ENCODE measurements at regions of chr6 and their contacts with region 1.

Region 1: DNA sequence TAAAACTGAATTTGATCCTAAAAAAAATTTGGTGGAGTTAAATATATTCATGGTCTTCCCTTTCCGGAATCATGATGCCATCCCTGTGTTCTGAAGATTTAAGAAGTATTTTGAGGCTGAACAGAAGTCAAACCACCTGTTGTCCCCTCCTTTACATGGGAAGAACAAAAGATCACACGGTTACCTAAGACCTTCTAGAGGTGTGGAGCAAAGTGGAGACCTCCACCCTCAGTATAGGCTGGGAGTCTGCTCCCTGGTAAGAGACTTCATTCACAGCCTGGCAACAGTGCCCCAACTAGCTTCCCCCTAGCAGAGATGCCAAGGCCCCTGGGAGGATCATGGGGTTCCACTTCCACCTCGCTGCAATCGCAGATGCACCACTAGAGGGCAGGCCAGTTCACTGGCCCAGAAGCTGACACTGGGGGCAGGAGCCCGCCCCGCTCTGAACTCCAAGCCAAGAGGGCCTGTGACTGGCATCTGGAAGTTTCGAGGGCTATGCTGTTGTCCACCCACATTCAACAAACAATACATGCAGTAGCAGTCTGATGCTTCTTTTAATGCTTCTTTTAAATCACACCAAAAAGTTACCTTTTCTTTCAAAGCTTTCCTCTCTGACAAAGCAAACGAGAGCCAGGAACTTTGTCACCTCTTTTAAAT is 19.5 kb upstream of the UBE2J1 start:
- DNase-seq: peak; percentile 89
- ATAC-seq: peak; percentile 82
- H3K4me3 Mint-ChIP-seq: no peak overlapping the region
- H3K27ac Mint-ChIP-seq: peak overlapping the region; percentile 78
- H3K4me1 Mint-ChIP-seq: peaks cover 43% of the 10 kb centered on the region
- H3K27me3 Mint-ChIP-seq: peaks cover 17% of the 10 kb centered on the region

Region 2: GRCh38 chr6:88843040-88843439 is 528.9 kb before region 1 on chr6:
- CTCF ChIA-PET with region 1: no interaction called
- DNase-seq: no peak
- ATAC-seq: no peak
- H3K4me3 Mint-ChIP-seq: no peak overlapping the region
- H3K27ac Mint-ChIP-seq: no peak overlapping the region
- H3K4me1 Mint-ChIP-seq: no peaks in the 10 kb centered on the region
- H3K27me3 Mint-ChIP-seq: no peaks in the 10 kb centered on the region

Region 3: DNA sequence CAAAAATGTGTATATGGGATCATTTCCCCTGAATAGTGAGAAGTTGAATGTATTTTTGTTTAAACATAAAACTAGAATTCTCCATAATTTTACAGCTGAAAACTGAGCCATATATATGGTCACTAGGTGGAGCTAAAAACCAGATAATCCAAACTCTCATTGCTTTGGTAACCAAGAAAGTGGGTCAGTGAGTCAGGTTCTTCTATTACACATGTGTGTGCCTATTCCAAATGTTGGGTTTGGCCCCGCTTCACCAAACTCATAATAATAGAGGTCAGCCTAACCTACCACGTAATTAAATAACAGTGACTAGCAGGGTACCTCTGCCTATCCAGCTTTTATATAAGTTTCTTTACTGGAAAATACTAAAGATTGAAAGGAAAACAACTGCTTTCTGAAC is 389.3 kb before region 1 on chr6:
- CTCF ChIA-PET with region 1: interaction called, 11 read pairs
- DNase-seq: no peak
- ATAC-seq: peak; percentile 80
- H3K4me3 Mint-ChIP-seq: no peak overlapping the region
- H3K27ac Mint-ChIP-seq: no peak overlapping the region
- H3K4me1 Mint-ChIP-seq: no peaks in the 10 kb centered on the region
- H3K27me3 Mint-ChIP-seq: peaks cover 3% of the 10 kb centered on the region

Region 4: GRCh38 chr6:89360415-89360999 is 11.5 kb before region 1 on chr6:
- CTCF ChIA-PET with region 1: interaction called, 119 read pairs
- DNase-seq: no peak
- ATAC-seq: peak; percentile 84
- H3K4me3 Mint-ChIP-seq: peak overlapping the region; percentile 11
- H3K27ac Mint-ChIP-seq: peak overlapping the region; percentile 72
- H3K4me1 Mint-ChIP-seq: peaks cover 60% of the 10 kb centered on the region
- H3K27me3 Mint-ChIP-seq: no peaks in the 10 kb centered on the region

Region 5: GRCh38 chr6:89412071-89413005 is 40.4 kb after region 1 on chr6 and contains the start of gene RRAGD:
- CTCF ChIA-PET with region 1: interaction called, 28 read pairs
- DNase-seq: peak; percentile 70
- ATAC-seq: peak; percentile 88
- H3K4me3 Mint-ChIP-seq: peak within 1 kb of the TSS; percentile 83
- H3K27ac Mint-ChIP-seq: peak within 1 kb of the TSS; percentile 67
- H3K4me1 Mint-ChIP-seq: peaks cover 20% of the 10 kb centered on the region
- H3K27me3 Mint-ChIP-seq: peaks cover 61% of the 10 kb centered on the region
- total RNA-seq, gene RRAGD: 1.3 to 5.7 TPM

Region 6: GRCh38 chr6:89610149-89610642 is 238.2 kb after region 1 on chr6:
- CTCF ChIA-PET with region 1: interaction called, 17 read pairs
- DNase-seq: peak; percentile 83
- ATAC-seq: peak; percentile 88
- H3K4me3 Mint-ChIP-seq: no peak overlapping the region
- H3K27ac Mint-ChIP-seq: no peak overlapping the region
- H3K4me1 Mint-ChIP-seq: peaks cover 22% of the 10 kb centered on the region
- H3K27me3 Mint-ChIP-seq: no peaks in the 10 kb centered on the region